ENCODE measurements at regions of chr19 and their contacts with region 1.

Region 1: GRCh38 chr19:38849860-38850435 is at the start of gene HNRNPL:
- DNase-seq: peak; percentile 99 to 100
- ATAC-seq: peak; percentile 72 to 86 (median 80)
- H3K4me3 ChIP-seq: peak within 1 kb of the TSS; percentile 80 to 98 (median 90)
- H3K27ac ChIP-seq: peak within 1 kb of the TSS; percentile 99 to 100 (median 100)
- H3K4me1 ChIP-seq: peaks cover 17 to 58% (median 46%) of the 10 kb centered on the region in 9 donors
- H3K27me3 ChIP-seq: no peaks in the 10 kb centered on the region
- CTCF ChIP-seq: peak in 8 of 9 donors; percentile 45 to 74 (median 64)
- total RNA-seq, gene HNRNPL: 134 to 196 (median 170) TPM

Region 2: DNA sequence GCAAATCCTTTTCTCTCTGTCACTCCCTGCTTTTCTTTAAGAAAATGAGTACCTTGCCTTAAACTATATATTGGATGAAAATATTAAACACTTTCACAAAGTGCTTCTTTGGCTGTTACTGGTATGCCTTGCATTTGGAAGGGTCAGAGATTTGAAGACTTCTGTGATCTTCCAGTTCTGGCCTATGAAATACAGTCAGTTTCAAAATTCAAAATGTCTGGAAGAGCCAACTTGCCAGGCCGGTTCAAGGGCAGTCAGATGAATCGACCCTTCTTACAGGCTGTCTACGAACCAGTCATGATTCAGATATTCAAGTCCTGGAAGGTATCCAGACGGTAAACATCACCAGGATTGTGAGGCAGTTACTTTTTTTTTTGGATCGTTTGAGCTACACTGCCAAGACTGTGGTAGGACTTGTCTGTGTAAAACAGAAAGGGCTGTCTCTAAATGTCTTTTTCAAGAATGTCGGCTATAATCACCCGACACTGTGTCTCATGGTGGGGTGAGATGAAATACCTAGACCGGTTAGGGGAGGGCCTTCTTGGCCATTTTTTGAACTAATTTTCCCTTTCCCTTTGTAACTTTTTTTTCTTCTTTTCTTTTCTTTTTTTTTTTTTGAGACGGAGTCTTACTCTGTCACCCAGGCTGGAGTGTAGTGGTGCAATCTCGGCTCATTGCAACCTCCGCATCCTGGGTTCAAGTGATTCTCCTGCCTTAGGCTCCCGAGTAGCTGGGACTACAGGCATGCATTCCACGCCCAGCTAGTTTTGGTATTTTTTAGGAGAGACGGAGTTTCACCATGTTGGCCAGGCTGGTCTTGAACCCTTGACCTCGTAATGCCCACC is 191.3 kb before region 1 on chr19:
- intact Hi-C with region 1: loop called in 1 of 10 experiments (anchors 10 kb)
- DNase-seq: peak in 1 of 2 donors; percentile 74
- ATAC-seq: peak; percentile 55 to 84 (median 74)
- H3K4me3 ChIP-seq: peak overlapping the region in 6 of 10 donors; percentile 4 to 20 (median 13)
- H3K27ac ChIP-seq: peak overlapping the region; percentile 65 to 99 (median 96)
- H3K4me1 ChIP-seq: peaks cover 52 to 100% (median 100%) of the 10 kb centered on the region in 9 donors
- H3K27me3 ChIP-seq: no peaks in the 10 kb centered on the region
- CTCF ChIP-seq: no peak

Region 3: GRCh38 chr19:38718747-38719543 is 131.0 kb before region 1 on chr19:
- intact Hi-C with region 1: loop called in 1 of 10 experiments (anchors 5 kb)
- DNase-seq: peak; percentile 70 to 80
- ATAC-seq: peak; percentile 17 to 57 (median 38)
- H3K4me3 ChIP-seq: no peak overlapping the region
- H3K27ac ChIP-seq: peak overlapping the region; percentile 58 to 93 (median 89)
- H3K4me1 ChIP-seq: peaks cover 45 to 98% (median 76%) of the 10 kb centered on the region in 9 donors
- H3K27me3 ChIP-seq: no peaks in the 10 kb centered on the region
- CTCF ChIP-seq: peak; percentile 13 to 62 (median 39)

Region 4: DNA sequence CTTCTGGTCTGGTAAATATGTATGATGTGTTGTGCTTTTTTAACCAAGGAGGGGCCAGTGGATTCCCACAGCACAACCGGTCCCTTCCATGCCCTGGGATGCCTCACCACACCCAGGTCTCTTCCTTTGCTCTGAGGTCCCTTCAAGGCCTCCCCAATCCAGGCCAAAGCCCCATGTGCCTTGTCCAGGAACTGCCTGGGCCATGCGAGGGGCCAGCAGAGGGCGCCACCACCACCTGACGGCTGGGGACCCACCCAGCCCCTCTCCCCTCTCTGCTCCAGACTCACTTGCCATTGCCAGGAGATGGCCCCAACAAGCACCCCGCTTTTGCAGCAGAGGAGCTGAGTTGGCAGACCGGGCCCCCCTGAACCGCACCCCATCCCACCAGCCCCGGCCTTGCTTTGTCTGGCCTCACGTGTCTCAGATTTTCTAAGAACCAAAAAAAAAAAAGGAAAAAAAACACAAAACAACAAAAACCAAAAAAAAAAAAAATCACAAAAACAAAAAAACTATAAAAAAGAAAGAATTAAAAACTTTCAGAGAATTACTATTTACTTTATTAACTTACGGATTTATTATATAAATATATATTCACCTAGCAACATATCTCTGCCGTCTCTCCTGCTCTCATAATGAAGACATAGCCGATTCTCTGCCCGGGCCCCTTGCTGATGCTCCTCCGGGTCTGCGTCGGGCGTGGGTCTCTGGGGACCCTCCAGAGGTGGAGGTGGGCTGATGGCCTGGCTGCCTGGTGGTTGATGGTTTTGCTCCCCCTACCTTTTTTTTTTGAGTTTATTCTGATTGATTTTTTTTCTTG is 120.1 kb before region 1 on chr19:
- intact Hi-C with region 1: loop called in 1 of 10 experiments (anchors 10 kb)
- DNase-seq: peak; percentile 66 to 80
- ATAC-seq: peak; percentile 27 to 56 (median 42)
- H3K4me3 ChIP-seq: no peak overlapping the region
- H3K27ac ChIP-seq: peak overlapping the region; percentile 2 to 86 (median 69)
- H3K4me1 ChIP-seq: peaks cover 9 to 89% (median 48%) of the 10 kb centered on the region in 9 donors
- H3K27me3 ChIP-seq: no peaks in the 10 kb centered on the region
- CTCF ChIP-seq: peak; percentile 60 to 90 (median 79)

Region 5: GRCh38 chr19:38831142-38831605 is 18.8 kb before region 1 on chr19:
- intact Hi-C with region 1: loop called in 2 of 10 experiments (anchors 1 to 2 kb)
- DNase-seq: peak; percentile 54 to 75
- ATAC-seq: peak; percentile 35 to 67 (median 62)
- H3K4me3 ChIP-seq: peak overlapping the region; percentile 64 to 92 (median 74)
- H3K27ac ChIP-seq: peak overlapping the region; percentile 86 to 99 (median 94)
- H3K4me1 ChIP-seq: peaks cover 8 to 55% (median 40%) of the 10 kb centered on the region in 9 donors
- H3K27me3 ChIP-seq: no peaks in the 10 kb centered on the region
- CTCF ChIP-seq: no peak

Region 6: DNA sequence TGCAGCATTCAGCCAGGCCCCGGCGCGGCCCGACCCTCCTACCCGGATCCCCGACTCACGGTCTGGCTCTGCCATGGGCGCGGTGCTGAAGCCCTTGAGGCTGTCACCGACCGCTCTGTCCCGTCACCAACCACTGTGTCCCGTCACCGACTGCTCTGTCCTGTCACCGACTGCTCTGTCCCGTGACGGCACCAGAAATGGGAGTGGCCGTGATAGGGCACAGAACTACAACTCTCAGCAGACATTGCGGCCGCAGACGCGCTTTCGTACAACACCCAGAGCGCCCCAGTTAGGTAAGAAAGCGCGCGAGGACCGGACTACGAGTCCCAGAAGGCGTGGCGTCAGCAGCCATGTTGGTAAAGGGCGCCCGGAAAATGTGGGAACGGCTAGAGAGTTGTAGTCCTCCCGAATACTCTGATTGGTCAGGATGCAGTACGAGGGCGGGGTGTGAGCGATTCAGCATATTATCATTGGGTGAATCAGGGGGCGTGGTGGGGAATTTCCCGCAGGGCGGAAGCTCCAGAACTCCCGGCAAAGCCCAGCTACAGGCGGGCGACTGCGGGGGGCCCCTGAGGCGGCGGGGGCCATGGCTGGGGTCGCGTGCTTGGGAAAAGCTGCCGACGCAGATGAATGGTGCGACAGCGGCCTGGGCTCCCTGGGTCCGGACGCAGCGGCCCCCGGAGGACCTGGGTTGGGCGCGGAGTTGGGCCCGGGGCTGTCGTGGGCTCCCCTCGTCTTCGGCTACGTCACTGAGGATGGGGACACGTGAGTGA is 49.7 kb after region 1 on chr19 and contains the starts of genes NFKBIB and SIRT2:
- intact Hi-C with region 1: loop called in 6 of 10 experiments (anchors 1 to 5 kb)
- DNase-seq: peak; percentile 98 to 100
- ATAC-seq: peak; percentile 97 to 99 (median 98)
- H3K4me3 ChIP-seq: peak within 1 kb of the TSS; percentile 64 to 90 (median 80)
- H3K27ac ChIP-seq: peak within 1 kb of the TSS; percentile 61 to 93 (median 90)
- H3K4me1 ChIP-seq: peaks cover 4 to 41% (median 34%) of the 10 kb centered on the region in 9 donors
- H3K27me3 ChIP-seq: no peaks in the 10 kb centered on the region
- CTCF ChIP-seq: peak in 1 of 9 donors; percentile 23
- total RNA-seq, gene NFKBIB: 16.1 to 26.6 (median 21.6) TPM
- total RNA-seq, gene SIRT2: 51.7 to 103 (median 72.6) TPM